Activated B cell treated with CpG ODN at 0.5 μM for 24 hours (primary cell): ENCODE measurements at regions of chr12 and their contacts with region 1.

Region 1: DNA sequence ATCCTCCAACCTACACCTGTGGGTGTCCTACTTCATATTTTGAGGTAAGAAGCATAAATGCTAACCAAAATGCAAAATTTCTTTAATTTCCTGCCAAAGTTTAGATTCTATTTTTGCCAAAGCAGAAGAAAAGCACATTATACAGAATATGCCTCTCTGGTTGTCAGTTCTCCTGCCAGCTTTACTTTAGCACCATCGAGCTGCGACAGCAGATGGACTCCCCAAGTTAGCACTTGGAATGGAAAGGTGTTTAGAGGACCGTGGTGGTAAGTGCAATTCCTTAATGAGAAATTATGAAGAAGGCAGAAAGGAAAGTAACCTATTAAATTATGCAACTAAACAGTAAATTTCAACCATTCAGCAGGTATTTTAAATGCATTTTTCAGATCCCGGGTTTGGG is 326.6 kb downstream of the RERGL start:
- DNase-seq: no peak
- ATAC-seq: no peak
- H3K4me3 Mint-ChIP-seq: no peak overlapping the region
- H3K27ac Mint-ChIP-seq: no peak overlapping the region
- H3K4me1 Mint-ChIP-seq: no peaks in the 10 kb centered on the region
- H3K27me3 Mint-ChIP-seq: no peaks in the 10 kb centered on the region
- CTCF ChIP-seq: no peak

Region 2: DNA sequence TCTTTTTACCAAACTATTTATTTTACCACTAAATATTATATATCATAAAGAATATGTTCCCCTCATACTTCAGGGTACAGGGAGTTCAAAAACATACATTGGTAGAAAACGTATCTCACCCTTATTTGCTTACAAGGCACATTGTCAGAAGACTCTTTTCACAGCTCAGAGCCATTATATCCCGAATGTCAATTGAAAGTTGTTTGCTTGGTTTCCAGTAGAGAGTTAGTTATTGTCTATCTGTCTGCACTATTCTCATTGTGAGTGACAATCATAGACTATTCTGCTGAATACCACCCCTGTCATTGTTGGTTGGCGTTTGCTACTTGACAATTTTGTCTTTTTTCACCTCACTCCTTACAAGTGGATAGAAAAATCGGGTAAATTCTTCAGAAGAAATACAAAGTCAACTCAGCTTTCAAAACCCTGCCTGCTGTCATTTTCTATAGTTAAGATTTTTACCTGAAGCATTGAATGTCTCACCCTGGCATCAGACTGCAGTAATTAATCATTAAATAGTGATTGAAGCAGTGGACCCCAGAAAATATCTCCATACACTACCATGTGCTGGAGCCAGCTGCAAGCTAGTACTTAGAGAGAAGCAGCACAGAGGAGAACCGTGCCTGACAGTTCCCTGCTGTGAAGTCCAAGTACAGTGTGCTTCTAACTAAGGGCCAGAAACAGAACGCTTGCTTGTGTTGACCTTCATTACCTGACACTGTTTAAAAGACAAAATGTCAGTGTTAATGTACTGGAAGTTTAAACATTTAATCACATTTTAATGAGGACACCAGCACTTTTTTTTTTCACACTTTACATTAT is 183.9 kb before region 1 on chr12:
- CTCF ChIA-PET with region 1: no interaction called
- POLR2A ChIA-PET with region 1: no interaction called
- intact Hi-C with region 1: no loop called
- DNase-seq: no peak
- ATAC-seq: no peak
- H3K4me3 Mint-ChIP-seq: no peak overlapping the region
- H3K27ac Mint-ChIP-seq: no peak overlapping the region
- H3K4me1 Mint-ChIP-seq: no peaks in the 10 kb centered on the region
- H3K27me3 Mint-ChIP-seq: no peaks in the 10 kb centered on the region
- CTCF ChIP-seq: no peak

Region 3: DNA sequence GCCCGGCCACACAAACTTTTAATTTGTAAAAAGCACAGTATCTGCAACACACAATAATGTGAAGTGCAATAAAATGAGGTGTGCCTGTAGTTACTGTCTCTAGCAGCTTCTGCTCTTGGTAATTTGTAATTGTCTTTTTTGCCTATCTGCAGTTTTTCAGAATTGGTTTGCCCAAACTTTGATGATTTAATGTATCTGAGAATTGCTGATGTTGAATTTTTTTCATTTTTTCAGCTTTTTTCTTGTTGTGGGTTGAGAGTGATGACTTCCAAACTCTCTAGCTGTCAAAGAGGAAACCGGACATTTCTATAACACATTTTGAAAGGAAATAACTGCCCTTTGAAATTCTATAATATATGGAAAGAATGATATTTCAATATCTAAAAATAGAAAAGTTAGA is 89.7 kb after region 1 on chr12:
- CTCF ChIA-PET with region 1: interaction called, 3 read pairs
- POLR2A ChIA-PET with region 1: no interaction called
- intact Hi-C with region 1: loop called (anchors 2 kb)
- DNase-seq: no peak
- ATAC-seq: no peak
- H3K4me3 Mint-ChIP-seq: no peak overlapping the region
- H3K27ac Mint-ChIP-seq: no peak overlapping the region
- H3K4me1 Mint-ChIP-seq: no peaks in the 10 kb centered on the region
- H3K27me3 Mint-ChIP-seq: no peaks in the 10 kb centered on the region
- CTCF ChIP-seq: no peak